ENCODE measurements at regions of chr14 and their contacts with region 1.

Region 1: GRCh38 chr14:101774006-101774795 is 12.7 kb downstream of the PPP2R5C start:
- DNase-seq: no peak
- ATAC-seq: no peak
- H3K4me3 ChIP-seq: no peak overlapping the region
- H3K27ac ChIP-seq: peak overlapping the region in 3 of 12 donors; percentile 28 to 41 (median 33)
- H3K4me1 ChIP-seq: peaks cover 0 to 46% (median 10%) of the 10 kb centered on the region in 12 donors
- H3K27me3 ChIP-seq: no peaks in the 10 kb centered on the region
- CTCF ChIP-seq: no peak
- POLR2A ChIP-seq: no peak

Region 2: GRCh38 chr14:101595887-101596721 is 178.1 kb before region 1 on chr14:
- intact Hi-C with region 1: no loop called
- DNase-seq: no peak
- ATAC-seq: no peak
- H3K4me3 ChIP-seq: no peak overlapping the region
- H3K27ac ChIP-seq: no peak overlapping the region
- H3K4me1 ChIP-seq: peaks cover 0 to 7% (median 0%) of the 10 kb centered on the region in 12 donors
- H3K27me3 ChIP-seq: no peaks in the 10 kb centered on the region
- CTCF ChIP-seq: no peak
- POLR2A ChIP-seq: no peak

Region 3: GRCh38 chr14:101654051-101654450 is 120.2 kb before region 1 on chr14:
- intact Hi-C with region 1: no loop called
- DNase-seq: no peak
- ATAC-seq: no peak
- H3K4me3 ChIP-seq: no peak overlapping the region
- H3K27ac ChIP-seq: no peak overlapping the region
- H3K4me1 ChIP-seq: no peaks in the 10 kb centered on the region
- H3K27me3 ChIP-seq: peaks cover 0 to 42% (median 0%) of the 10 kb centered on the region in 9 donors
- CTCF ChIP-seq: no peak
- POLR2A ChIP-seq: no peak

Region 4: GRCh38 chr14:101809671-101810514 is 35.7 kb after region 1 on chr14:
- intact Hi-C with region 1: loop called in 3 of 10 experiments (anchors 5 kb)
- DNase-seq: peak; percentile 84 to 90 (median 90)
- ATAC-seq: peak; percentile 92 to 96 (median 94)
- H3K4me3 ChIP-seq: peak overlapping the region; percentile 32 to 84 (median 65)
- H3K27ac ChIP-seq: peak overlapping the region; percentile 92 to 99 (median 97)
- H3K4me1 ChIP-seq: peaks cover 7 to 59% (median 46%) of the 10 kb centered on the region in 12 donors
- H3K27me3 ChIP-seq: no peaks in the 10 kb centered on the region
- CTCF ChIP-seq: no peak
- POLR2A ChIP-seq: peak; percentile 9 to 56

Region 5: DNA sequence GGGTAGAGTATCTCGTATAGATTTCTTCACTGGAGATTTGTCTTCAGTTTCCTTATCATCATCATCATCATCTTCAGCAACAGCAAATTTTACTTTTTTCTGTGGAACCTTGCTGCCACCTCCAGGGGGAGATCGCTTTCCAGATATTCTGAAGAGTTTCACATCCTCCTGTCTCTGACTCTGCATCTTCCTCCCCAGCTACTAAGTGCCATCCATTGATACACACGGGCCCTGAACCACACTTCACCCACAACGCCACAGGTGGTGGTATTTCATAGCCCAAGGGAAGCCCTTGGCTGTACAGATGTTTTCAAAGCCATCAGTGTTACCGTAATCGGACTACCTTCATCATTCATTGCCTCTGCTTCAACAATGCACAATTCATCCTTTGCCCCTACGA is 69.5 kb after region 1 on chr14:
- intact Hi-C with region 1: loop called in 2 of 10 experiments (anchors 10 kb)
- DNase-seq: no peak
- ATAC-seq: peak in 2 of 4 donors; percentile 11 to 31
- H3K4me3 ChIP-seq: no peak overlapping the region
- H3K27ac ChIP-seq: peak overlapping the region in 9 of 12 donors; percentile 5 to 68 (median 39)
- H3K4me1 ChIP-seq: peaks cover 2 to 66% (median 45%) of the 10 kb centered on the region in 12 donors
- H3K27me3 ChIP-seq: no peaks in the 10 kb centered on the region
- CTCF ChIP-seq: peak in 9 of 12 donors; percentile 13 to 35 (median 24)
- POLR2A ChIP-seq: no peak

Region 6: DNA sequence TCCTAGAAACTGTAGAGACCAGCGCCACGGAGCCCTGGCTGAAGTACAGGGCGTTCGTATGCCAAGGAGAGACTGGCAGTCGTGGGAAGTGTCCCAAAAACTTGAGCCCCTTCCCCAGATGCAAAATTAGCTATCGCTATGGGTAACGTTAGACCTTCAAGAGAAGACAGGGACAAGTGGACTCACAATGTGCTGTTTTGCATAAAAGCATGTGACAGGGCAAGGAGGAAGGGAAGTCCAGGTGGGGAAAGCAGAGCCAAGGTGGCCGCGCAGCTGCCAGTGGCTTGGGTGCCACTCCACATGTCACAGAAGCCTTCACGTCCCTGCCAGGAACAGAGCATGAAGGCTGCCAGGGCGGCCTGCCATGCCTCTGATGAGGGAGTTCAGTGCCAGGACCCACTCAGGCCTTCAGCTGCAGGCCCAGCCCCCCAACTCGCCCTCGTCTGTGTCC is 128.9 kb after region 1 on chr14:
- intact Hi-C with region 1: loop called in 4 of 10 experiments (anchors 5 to 10 kb)
- DNase-seq: peak; percentile 73 to 91 (median 83)
- ATAC-seq: peak; percentile 94 to 98 (median 96)
- H3K4me3 ChIP-seq: no peak overlapping the region
- H3K27ac ChIP-seq: peak overlapping the region in 10 of 12 donors; percentile 4 to 78 (median 34)
- H3K4me1 ChIP-seq: peaks cover 0 to 20% (median 0%) of the 10 kb centered on the region in 12 donors
- H3K27me3 ChIP-seq: no peaks in the 10 kb centered on the region
- CTCF ChIP-seq: no peak
- POLR2A ChIP-seq: no peak

Region 7: GRCh38 chr14:101964297-101965144 is 190.3 kb after region 1 on chr14 and contains the start of gene DYNC1H1:
- intact Hi-C with region 1: loop called in 1 of 10 experiments (anchors 5 kb)
- DNase-seq: peak; percentile 93 to 97 (median 97)
- ATAC-seq: peak; percentile 85 to 93 (median 91)
- H3K4me3 ChIP-seq: peak within 1 kb of the TSS; percentile 76 to 100 (median 99)
- H3K27ac ChIP-seq: peak within 1 kb of the TSS; percentile 82 to 98 (median 96)
- H3K4me1 ChIP-seq: peaks cover 0 to 59% (median 40%) of the 10 kb centered on the region in 12 donors
- H3K27me3 ChIP-seq: no peaks in the 10 kb centered on the region
- CTCF ChIP-seq: no peak
- POLR2A ChIP-seq: peak; percentile 99 to 100
- total RNA-seq, gene DYNC1H1: 291 to 942 (median 603) TPM

Measured in heart left ventricle (tissue), 16 donors.